SK-N-SH (cell line): ENCODE measurements at regions of chr4 and their contacts with region 1.

Region 1: DNA sequence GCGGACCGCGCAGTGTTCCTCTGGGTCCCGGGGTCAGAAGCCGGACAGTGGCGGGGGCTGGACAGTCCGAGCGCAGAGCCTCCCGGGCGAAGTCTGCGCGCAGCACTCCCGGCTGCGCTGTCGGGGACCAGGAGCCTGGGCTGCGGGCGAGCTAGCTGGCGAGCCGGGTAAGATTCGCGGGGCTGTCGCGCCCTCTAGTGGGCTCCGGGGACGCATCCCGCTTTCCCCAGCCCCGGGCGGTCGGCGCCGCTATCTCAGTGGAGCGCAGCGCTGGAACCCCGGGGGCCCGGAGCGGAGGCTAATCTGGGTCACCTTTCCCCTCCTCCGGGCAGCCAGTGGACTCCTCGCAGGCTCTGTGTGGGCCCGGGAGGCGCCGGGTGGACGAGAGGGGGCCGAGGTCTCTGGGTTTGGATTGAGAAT is 4.2 kb downstream of the PDGFRA start:
- DNase-seq: peak; percentile 91
- H3K4me3 ChIP-seq: peak overlapping the region; percentile 64 to 85
- H3K27ac ChIP-seq: peak overlapping the region; percentile 72 to 91
- H3K4me1 ChIP-seq: peaks cover 7 to 8% of the 10 kb centered on the region in 2 experiments; a peak in 3 of 4 replicates
- H3K27me3 ChIP-seq: no peaks in the 10 kb centered on the region
- CTCF ChIP-seq: peak; percentile 69
- EP300 ChIP-seq: 0 out of 4 replicates have a peak, but pooled peaks of 1 of the 2 experiments have one; percentile 20
- RAD21 ChIP-seq: peak; percentile 79

Region 2: DNA sequence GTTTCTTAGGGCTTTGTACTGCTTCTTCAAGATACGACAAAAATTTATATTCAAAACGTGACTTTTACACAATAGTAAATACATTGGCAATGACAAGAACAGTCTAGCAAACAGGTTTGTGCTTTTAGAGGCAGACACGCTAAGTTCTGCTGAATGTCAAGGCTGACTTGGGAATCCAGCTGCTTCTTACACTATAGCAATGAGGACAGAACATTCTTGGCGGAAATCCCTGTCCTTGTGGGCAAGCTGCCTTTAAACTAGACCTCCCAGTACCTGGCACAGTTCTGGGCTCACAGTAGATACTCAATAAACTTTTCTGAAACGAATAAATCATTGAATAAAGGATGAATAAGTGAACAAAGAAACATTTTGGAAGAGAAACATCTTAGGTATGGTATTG is 1223.0 kb before region 1 on chr4:
- CTCF ChIA-PET with region 1: interaction called, 128 read pairs
- POLR2A ChIA-PET with region 1: interaction called, 7 read pairs
- DNase-seq: no peak
- H3K4me3 ChIP-seq: no peak overlapping the region
- H3K27ac ChIP-seq: peak overlapping the region in 1 of 2 experiments; percentile 100; a peak in 2 of 4 replicates
- H3K4me1 ChIP-seq: peaks cover 34 to 49% of the 10 kb centered on the region in 2 experiments
- H3K27me3 ChIP-seq: no peaks in the 10 kb centered on the region
- CTCF ChIP-seq: no peak
- EP300 ChIP-seq: no peak
- RAD21 ChIP-seq: no peak

Region 3: GRCh38 chr4:53055274-53055673 is 1178.0 kb before region 1 on chr4:
- CTCF ChIA-PET with region 1: interaction called, 40 read pairs
- POLR2A ChIA-PET with region 1: interaction called, 14 read pairs
- DNase-seq: peak; percentile 14
- H3K4me3 ChIP-seq: no peak overlapping the region
- H3K27ac ChIP-seq: peak overlapping the region in 1 of 2 experiments; percentile 93; a peak in 2 of 4 replicates
- H3K4me1 ChIP-seq: peaks cover 7 to 40% of the 10 kb centered on the region in 2 experiments; a peak in 3 of 4 replicates
- H3K27me3 ChIP-seq: no peaks in the 10 kb centered on the region
- CTCF ChIP-seq: no peak
- EP300 ChIP-seq: peak in 1 of 2 experiments; percentile 25; a peak in 1 of 4 replicates
- RAD21 ChIP-seq: no peak; the same call in 1 of the 2 replicates

Region 4: DNA sequence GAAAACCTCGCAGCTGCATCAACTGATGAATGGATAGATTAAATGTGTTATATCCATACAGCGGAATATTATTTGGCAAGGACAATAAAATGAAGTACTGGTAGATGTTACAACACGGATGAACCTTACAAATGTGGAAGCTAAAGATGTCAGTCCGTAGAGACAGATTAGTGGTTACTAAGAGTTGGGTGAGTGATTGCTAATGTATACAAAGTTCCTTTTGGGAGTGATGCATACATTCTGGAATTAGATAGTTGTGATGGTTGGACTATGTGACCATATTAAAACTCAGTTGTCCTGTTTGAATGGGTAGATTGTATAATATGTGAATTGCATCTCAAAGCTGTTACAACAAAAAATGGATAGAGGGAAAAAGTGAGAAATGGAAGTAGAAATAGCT is 853.1 kb before region 1 on chr4:
- CTCF ChIA-PET with region 1: interaction called, 14 read pairs
- POLR2A ChIA-PET with region 1: no interaction called
- DNase-seq: no peak
- H3K4me3 ChIP-seq: no peak overlapping the region; a peak in 1 of 4 replicates
- H3K27ac ChIP-seq: no peak overlapping the region
- H3K4me1 ChIP-seq: peaks cover 8 to 12% of the 10 kb centered on the region in 2 experiments; a peak in 3 of 4 replicates
- H3K27me3 ChIP-seq: no peaks in the 10 kb centered on the region
- CTCF ChIP-seq: no peak
- EP300 ChIP-seq: no peak
- RAD21 ChIP-seq: no peak

Region 5: GRCh38 chr4:53908661-53909078 is 324.6 kb before region 1 on chr4:
- CTCF ChIA-PET with region 1: interaction called, 152 read pairs
- POLR2A ChIA-PET with region 1: interaction called, 8 read pairs
- DNase-seq: peak; percentile 58
- H3K4me3 ChIP-seq: peak overlapping the region; percentile 14 to 21; a peak in 3 of 4 replicates
- H3K27ac ChIP-seq: peak overlapping the region; percentile 59 to 86
- H3K4me1 ChIP-seq: peaks cover 7 to 22% of the 10 kb centered on the region in 2 experiments; a peak in 3 of 4 replicates
- H3K27me3 ChIP-seq: no peaks in the 10 kb centered on the region
- CTCF ChIP-seq: peak; percentile 85
- EP300 ChIP-seq: peak; percentile 19 to 61; a peak in 3 of 4 replicates
- RAD21 ChIP-seq: peak; percentile 97

Region 6: DNA sequence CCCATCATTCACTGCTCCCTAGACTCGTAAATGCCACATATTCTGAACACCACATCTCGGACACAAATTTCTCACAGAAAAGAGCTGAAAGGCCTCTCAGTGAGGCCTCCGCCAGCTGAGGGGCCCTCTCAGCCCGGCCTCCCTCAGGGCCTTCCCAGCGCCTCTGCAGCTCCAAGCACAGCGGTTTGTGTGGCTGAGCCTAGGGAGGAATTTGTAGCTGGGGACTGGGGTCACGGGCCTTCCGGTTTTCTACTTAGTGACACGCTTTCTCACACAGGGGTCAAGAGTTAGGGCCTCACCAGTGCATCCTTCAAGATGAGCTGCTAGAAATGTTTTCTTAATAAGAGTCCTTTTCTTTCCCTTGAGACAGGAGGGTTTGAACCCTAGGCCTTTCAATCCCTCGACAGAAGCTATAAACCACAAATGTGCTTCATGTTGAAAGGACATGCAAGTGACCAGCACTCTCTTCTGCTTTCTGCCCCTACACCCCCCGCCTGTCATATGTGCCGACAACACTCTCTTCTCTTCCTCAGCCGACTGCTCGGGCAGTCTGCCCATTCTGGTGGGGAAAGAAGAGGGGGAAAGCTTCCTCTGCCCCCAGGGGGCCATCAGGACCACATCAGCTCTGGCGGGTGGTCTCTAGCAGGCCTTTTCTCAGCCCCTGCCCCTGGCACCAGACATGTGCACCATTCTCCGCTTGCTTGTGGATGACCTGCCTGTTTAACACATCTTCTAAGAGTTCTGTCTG is 273.7 kb before region 1 on chr4:
- CTCF ChIA-PET with region 1: interaction called, 14 read pairs
- POLR2A ChIA-PET with region 1: no interaction called
- DNase-seq: no peak
- H3K4me3 ChIP-seq: no peak overlapping the region
- H3K27ac ChIP-seq: no peak overlapping the region
- H3K4me1 ChIP-seq: peaks cover 27 to 33% of the 10 kb centered on the region in 2 experiments
- H3K27me3 ChIP-seq: no peaks in the 10 kb centered on the region
- CTCF ChIP-seq: no peak
- EP300 ChIP-seq: no peak
- RAD21 ChIP-seq: no peak

Region 7: DNA sequence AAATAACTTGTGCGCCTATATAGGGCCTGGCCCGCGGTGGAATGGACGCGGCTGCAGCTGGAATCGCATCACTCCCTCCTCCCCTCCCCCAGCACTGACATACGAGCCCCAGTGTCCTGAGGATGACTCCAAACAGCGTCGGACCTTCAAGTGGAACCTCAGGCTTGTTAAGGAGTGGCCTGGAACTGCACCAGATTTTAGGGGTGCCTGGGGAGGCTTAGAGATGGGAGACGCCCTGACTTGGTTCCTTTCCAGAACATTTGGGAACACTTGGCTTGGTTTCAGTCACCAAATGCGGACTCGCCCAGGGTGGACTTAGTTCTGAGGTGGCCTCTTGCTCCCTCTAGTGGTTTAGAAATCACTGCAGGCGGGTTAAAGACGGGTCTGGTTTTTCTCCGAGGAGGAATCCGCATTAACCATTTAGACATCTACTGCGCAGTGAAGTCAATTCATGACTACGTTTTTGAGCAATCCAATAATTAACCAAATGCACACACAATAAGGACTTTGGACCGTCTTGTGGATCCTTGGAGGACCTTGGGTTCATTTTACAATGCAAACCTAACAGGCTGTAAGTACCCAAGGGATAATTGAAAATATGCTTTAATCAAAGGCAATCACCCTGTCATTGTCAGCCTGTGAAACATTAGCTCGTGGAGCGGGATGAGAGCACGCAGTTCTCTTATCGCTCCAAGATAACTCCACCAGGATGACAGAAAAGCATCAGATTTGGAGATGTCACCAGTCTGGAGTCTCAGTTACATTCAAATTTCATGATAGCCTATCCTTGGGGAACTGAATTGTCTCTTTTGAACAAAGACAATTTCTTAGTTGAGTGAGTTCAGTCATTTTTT is 15.4 kb before region 1 on chr4:
- CTCF ChIA-PET with region 1: interaction called, 97 read pairs
- POLR2A ChIA-PET with region 1: no interaction called
- DNase-seq: peak; percentile 81
- H3K4me3 ChIP-seq: peak overlapping the region; percentile 45 to 54
- H3K27ac ChIP-seq: peak overlapping the region in 1 of 2 experiments; percentile 71; a peak in 1 of 4 replicates
- H3K4me1 ChIP-seq: peaks cover 0 to 7% of the 10 kb centered on the region in 2 experiments; a peak in 3 of 4 replicates
- H3K27me3 ChIP-seq: no peaks in the 10 kb centered on the region
- CTCF ChIP-seq: peak; percentile 96
- EP300 ChIP-seq: peak; percentile 24 to 56; a peak in 2 of 4 replicates
- RAD21 ChIP-seq: peak; percentile 94